ENCODE measurements at regions of chr14 and their contacts with region 1.

Region 1: GRCh38 chr14:30982533-30982932 is 42.9 kb upstream of the AP4S1 start:
- DNase-seq: no peak
- H3K4me3 ChIP-seq: no peak overlapping the region
- H3K27ac ChIP-seq: no peak overlapping the region
- H3K4me1 ChIP-seq: no peaks in the 10 kb centered on the region
- H3K27me3 ChIP-seq: no peaks in the 10 kb centered on the region
- CTCF ChIP-seq: no peak
- POLR2A ChIP-seq: no peak

Region 2: DNA sequence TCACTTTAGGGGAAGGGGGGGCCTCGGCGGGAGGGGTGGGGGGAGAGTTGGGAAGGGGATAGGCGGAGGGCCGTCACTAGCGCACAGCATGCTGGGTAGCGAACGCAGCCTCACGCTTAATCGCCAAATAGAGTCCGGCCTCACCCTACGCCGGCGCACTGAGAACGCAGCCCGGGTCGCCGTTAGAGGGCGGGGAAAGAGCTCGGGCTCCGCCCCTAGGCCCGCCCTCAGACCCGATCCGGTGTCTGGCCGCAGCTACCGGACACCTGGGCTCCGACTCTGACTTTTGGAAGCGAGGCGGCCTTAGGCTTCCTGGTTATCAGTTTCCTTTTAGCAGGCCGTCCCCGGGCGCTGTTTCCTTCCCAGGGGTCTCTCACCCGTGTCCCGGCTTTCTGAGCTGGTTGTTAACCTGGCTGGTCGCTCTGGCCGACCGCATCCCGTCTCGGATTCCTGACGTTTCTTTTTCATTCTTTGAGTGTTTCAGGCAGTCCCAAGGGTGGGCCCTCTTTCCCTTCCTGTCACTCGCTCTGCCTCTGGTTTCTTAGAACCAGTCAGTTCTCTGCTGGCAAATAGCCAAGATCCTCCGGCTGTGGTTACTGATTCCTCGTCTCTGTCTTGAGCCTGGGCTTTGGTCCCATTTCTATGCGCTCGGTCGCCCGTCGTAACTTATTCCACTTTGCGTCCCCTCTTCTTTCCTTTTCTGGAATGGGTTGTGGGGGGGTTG is 44.0 kb after region 1 on chr14:
- CTCF ChIA-PET with region 1: interaction called, 6 read pairs
- POLR2A ChIA-PET with region 1: no interaction called
- dilution Hi-C with region 1: no loop called
- intact Hi-C with region 1: loop called (anchors 5 kb)
- DNase-seq: peak; percentile 97
- H3K4me3 ChIP-seq: peak overlapping the region; percentile 89 to 99 (median 96)
- H3K27ac ChIP-seq: peak overlapping the region; percentile 95
- H3K4me1 ChIP-seq: peaks cover 22% of the 10 kb centered on the region
- H3K27me3 ChIP-seq: no peaks in the 10 kb centered on the region
- CTCF ChIP-seq: no peak
- POLR2A ChIP-seq: peak; percentile 93

Region 3: DNA sequence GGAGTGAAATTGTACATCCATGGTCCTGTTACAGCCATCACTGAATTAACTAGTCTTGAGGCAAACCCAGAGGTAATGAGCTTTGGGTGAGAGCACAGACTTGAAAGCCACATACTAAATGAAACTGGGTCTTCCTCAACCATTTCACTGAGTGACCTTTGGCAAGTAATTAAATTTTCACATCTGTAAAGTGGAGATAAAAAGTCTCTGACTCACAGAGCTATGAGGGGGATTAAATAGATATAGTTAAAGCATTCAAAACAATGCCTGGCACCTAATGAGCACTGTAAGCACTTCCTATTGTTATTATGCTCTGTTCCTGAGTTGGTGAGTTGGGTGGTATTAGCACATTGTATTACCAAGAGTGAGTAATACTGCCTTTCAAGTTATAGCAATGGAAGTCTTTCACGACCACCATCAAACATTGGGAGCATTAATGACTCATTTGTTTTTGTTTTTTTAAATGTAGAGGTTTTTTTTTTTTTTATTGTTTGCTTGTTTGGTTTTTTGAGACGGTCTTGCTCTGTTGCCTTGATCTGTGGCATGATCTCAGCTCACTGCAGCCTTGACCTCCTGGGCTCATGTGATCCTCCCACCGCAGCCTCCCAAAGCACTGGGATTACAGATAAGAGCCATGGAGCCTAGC is 56.1 kb after region 1 on chr14:
- CTCF ChIA-PET with region 1: interaction called, 8 read pairs
- POLR2A ChIA-PET with region 1: no interaction called
- dilution Hi-C with region 1: no loop called
- intact Hi-C with region 1: loop called (anchors 1 kb)
- DNase-seq: peak; percentile 96
- H3K4me3 ChIP-seq: no peak overlapping the region
- H3K27ac ChIP-seq: peak overlapping the region; percentile 21
- H3K4me1 ChIP-seq: peaks cover 18% of the 10 kb centered on the region
- H3K27me3 ChIP-seq: no peaks in the 10 kb centered on the region
- CTCF ChIP-seq: no peak
- POLR2A ChIP-seq: no peak

Region 4: DNA sequence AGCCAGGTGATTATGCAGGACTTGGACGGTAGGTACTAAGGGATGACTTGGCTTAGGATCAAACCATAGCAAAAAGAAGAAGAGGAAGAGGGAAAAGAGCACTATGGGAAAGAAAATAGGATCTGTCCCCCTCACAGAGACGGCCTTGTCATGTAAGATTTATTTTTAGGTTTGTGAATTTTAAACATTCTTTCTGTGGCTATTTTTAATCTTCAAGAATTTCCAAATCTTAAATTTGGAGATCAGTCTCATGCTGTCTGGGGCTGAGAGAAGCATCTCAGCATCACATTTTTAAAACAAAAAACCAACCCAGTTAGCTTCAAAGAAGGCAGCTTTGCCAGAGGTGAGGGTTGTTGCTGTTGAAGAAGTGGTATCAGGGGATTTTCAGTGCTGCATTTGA is 96.2 kb after region 1 on chr14:
- CTCF ChIA-PET with region 1: interaction called, 28 read pairs
- POLR2A ChIA-PET with region 1: interaction called, 8 read pairs
- dilution Hi-C with region 1: no loop called
- intact Hi-C with region 1: loop called (anchors 1 kb)
- DNase-seq: no peak
- H3K4me3 ChIP-seq: no peak overlapping the region
- H3K27ac ChIP-seq: no peak overlapping the region
- H3K4me1 ChIP-seq: no peaks in the 10 kb centered on the region
- H3K27me3 ChIP-seq: no peaks in the 10 kb centered on the region
- CTCF ChIP-seq: no peak
- POLR2A ChIP-seq: no peak

Region 5: GRCh38 chr14:31084385-31084784 is 101.9 kb after region 1 on chr14:
- CTCF ChIA-PET with region 1: interaction called, 28 read pairs
- POLR2A ChIA-PET with region 1: no interaction called
- dilution Hi-C with region 1: no loop called
- intact Hi-C with region 1: loop called (anchors 1 kb)
- DNase-seq: no peak
- H3K4me3 ChIP-seq: no peak overlapping the region
- H3K27ac ChIP-seq: no peak overlapping the region
- H3K4me1 ChIP-seq: no peaks in the 10 kb centered on the region
- H3K27me3 ChIP-seq: no peaks in the 10 kb centered on the region
- CTCF ChIP-seq: no peak
- POLR2A ChIP-seq: no peak

Region 6: GRCh38 chr14:31096255-31096654 is 113.7 kb after region 1 on chr14:
- CTCF ChIA-PET with region 1: interaction called, 11 read pairs
- POLR2A ChIA-PET with region 1: no interaction called
- dilution Hi-C with region 1: no loop called
- intact Hi-C with region 1: no loop called
- DNase-seq: no peak
- H3K4me3 ChIP-seq: no peak overlapping the region
- H3K27ac ChIP-seq: no peak overlapping the region
- H3K4me1 ChIP-seq: no peaks in the 10 kb centered on the region
- H3K27me3 ChIP-seq: no peaks in the 10 kb centered on the region
- CTCF ChIP-seq: no peak
- POLR2A ChIP-seq: no peak

Measured in endothelial cell of umbilical vein (primary cell).